ENCODE measurements at regions of chr6 and their contacts with region 1.

Region 1: GRCh38 chr6:15420959-15421438 is 175.1 kb downstream of the JARID2 start:
- DNase-seq: peak in 4 of 9 donors; percentile 24 to 41 (median 28)
- ATAC-seq: peak; percentile 80
- H3K4me3 ChIP-seq: peak overlapping the region; percentile 9
- H3K4me3 Mint-ChIP-seq: peak overlapping the region; percentile 3 to 86 (median 69)
- H3K27ac ChIP-seq: peak overlapping the region; percentile 23
- H3K27ac Mint-ChIP-seq: peak overlapping the region; percentile 63 to 93 (median 87)
- H3K4me1 ChIP-seq: peaks cover 17 to 31% of the 10 kb centered on the region in 2 donors
- H3K4me1 Mint-ChIP-seq: peaks cover 37 to 65% (median 57%) of the 10 kb centered on the region in 7 donors
- H3K27me3 ChIP-seq: no peaks in the 10 kb centered on the region
- H3K27me3 Mint-ChIP-seq: no peaks in the 10 kb centered on the region

Region 2: DNA sequence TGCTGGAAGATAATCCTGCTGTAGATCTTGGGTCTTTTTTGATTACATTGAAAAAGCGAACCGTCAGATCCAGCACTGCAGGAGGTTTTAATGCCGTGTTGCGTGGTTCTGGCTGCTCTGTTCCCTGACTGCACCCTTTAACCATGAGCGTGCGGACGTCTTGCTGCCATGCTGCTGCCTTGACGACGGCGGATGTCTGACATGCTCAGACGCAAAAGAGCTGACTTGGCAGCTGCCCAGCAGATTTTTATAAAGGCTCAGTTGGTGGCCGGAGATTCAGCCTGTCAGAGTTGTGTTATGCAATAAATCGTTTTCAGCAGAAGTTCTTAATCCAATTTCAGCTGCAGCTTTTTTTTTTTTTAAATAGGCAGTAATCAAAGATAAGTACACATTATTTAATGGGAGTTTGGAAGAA is 55.7 kb before region 1 on chr6:
- CTCF ChIA-PET with region 1: no interaction called
- POLR2A ChIA-PET with region 1: no interaction called
- intact Hi-C with region 1: loop called in 1 of 2 experiments (anchors 5 kb)
- DNase-seq: peak in 8 of 9 donors; percentile 37 to 75 (median 70)
- ATAC-seq: peak; percentile 82
- H3K4me3 ChIP-seq: no peak overlapping the region
- H3K4me3 Mint-ChIP-seq: peak overlapping the region; percentile 46 to 85 (median 75)
- H3K27ac ChIP-seq: no peak overlapping the region
- H3K27ac Mint-ChIP-seq: peak overlapping the region in 8 of 9 donors; percentile 20 to 86 (median 74)
- H3K4me1 ChIP-seq: peaks cover 17 to 29% of the 10 kb centered on the region in 2 donors
- H3K4me1 Mint-ChIP-seq: peaks cover 0 to 35% (median 26%) of the 10 kb centered on the region in 7 donors
- H3K27me3 ChIP-seq: no peaks in the 10 kb centered on the region
- H3K27me3 Mint-ChIP-seq: no peaks in the 10 kb centered on the region

Region 3: DNA sequence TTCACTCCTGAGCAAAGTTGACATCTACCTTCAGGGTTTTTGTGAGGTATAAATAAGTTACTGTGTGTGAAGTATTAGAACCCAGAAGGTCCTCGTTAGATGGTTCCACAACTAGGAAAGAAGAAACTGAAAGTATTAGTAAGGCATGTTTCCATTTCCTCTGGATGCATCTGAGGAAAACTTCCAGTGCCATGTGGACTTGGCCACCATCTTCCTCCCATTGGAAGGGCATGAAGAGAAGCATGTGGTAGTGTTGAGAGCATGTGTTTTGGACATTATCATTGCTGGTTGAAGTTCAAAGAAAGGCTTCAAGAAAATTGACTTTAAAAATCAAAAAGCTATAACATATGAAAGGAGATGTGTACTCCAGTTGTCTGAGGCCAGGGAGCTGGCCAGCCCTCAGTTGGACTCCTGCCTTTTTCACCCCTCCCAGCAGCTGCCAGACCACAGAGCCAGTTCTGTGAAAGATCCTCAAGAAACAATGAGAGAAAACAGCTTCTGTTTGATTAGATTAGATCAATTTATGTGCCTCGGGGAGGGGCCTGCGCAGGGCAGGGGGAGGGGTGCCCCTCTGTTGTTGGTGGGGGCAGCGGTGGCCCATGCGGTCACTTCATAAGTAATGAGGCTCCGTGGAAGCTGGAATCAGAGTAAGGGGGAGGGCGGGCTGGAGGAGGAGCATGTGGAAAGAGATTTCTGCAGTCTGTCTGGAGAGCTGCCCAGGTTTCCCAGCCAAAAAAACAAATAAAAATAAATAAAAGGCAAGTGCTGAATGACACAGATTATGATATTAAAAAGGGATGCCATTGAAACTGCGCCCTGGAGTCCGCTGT is 21.1 kb before region 1 on chr6:
- CTCF ChIA-PET with region 1: interaction called, 4 read pairs
- POLR2A ChIA-PET with region 1: interaction called, 3 read pairs
- intact Hi-C with region 1: loop called in 1 of 2 experiments (anchors 1 kb)
- DNase-seq: no peak
- ATAC-seq: no peak
- H3K4me3 ChIP-seq: no peak overlapping the region
- H3K4me3 Mint-ChIP-seq: peak overlapping the region; percentile 82 to 95 (median 88)
- H3K27ac ChIP-seq: peak overlapping the region; percentile 34
- H3K27ac Mint-ChIP-seq: peak overlapping the region in 8 of 9 donors; percentile 69 to 90 (median 88)
- H3K4me1 ChIP-seq: peaks cover 17 to 41% of the 10 kb centered on the region in 2 donors
- H3K4me1 Mint-ChIP-seq: peaks cover 54 to 77% (median 69%) of the 10 kb centered on the region in 7 donors
- H3K27me3 ChIP-seq: no peaks in the 10 kb centered on the region
- H3K27me3 Mint-ChIP-seq: no peaks in the 10 kb centered on the region

Region 4: DNA sequence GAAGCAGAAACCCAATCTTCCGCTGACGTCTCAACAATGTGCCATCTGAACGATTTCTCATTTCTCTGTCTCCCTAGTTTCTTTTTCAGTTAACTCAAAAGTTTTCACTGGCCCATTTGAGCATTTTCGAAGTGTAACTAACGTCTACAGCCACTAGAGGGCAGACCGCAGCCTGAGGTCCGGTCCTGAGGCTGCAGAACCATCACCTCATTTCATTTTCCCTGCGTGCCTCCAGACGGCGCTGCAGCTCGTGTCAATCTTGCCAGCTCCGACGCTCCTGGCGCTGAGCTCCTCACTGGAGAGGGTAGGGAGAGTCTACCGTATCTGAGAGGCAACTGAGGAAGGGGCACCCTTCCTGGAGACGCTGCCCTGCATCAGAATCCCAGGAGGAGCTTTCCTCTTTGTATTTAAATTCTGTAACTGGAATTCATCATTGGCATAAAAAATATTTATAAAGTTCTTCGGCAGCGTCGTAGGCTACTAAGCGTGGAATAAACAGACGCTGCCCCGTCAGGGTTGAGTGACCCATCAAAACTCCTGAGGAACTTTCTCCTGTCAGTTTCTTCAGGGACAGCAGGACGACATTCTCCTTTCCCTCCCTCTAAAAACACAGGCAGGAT is 270.4 kb after region 1 on chr6:
- CTCF ChIA-PET with region 1: no interaction called
- POLR2A ChIA-PET with region 1: no interaction called
- intact Hi-C with region 1: no loop called
- DNase-seq: peak; percentile 56 to 84 (median 76)
- ATAC-seq: peak; percentile 100
- H3K4me3 ChIP-seq: no peak overlapping the region
- H3K4me3 Mint-ChIP-seq: peak overlapping the region in 2 of 10 donors; percentile 25 to 56
- H3K27ac ChIP-seq: no peak overlapping the region
- H3K27ac Mint-ChIP-seq: peak overlapping the region in 3 of 9 donors; percentile 1 to 23 (median 4)
- H3K4me1 ChIP-seq: no peaks in the 10 kb centered on the region
- H3K4me1 Mint-ChIP-seq: peaks cover 4 to 9% (median 7%) of the 10 kb centered on the region in 7 donors
- H3K27me3 ChIP-seq: no peaks in the 10 kb centered on the region
- H3K27me3 Mint-ChIP-seq: peaks cover 0 to 5% (median 0%) of the 10 kb centered on the region in 5 donors

Region 5: GRCh38 chr6:16999491-17000436 is 1578.8 kb after region 1 on chr6:
- CTCF ChIA-PET with region 1: no interaction called
- POLR2A ChIA-PET with region 1: no interaction called
- intact Hi-C with region 1: no loop called
- DNase-seq: no peak
- ATAC-seq: no peak
- H3K4me3 ChIP-seq: no peak overlapping the region
- H3K4me3 Mint-ChIP-seq: no peak overlapping the region
- H3K27ac ChIP-seq: no peak overlapping the region
- H3K27ac Mint-ChIP-seq: no peak overlapping the region
- H3K4me1 ChIP-seq: no peaks in the 10 kb centered on the region
- H3K4me1 Mint-ChIP-seq: no peaks in the 10 kb centered on the region
- H3K27me3 ChIP-seq: no peaks in the 10 kb centered on the region
- H3K27me3 Mint-ChIP-seq: peaks cover 29 to 68% (median 49%) of the 10 kb centered on the region in 5 donors